ENCODE measurements at regions of chr15 and their contacts with region 1.

Region 1: GRCh38 chr15:40893733-40894688 is at the start of gene VPS18:
- H3K4me3 ChIP-seq: peak within 1 kb of the TSS; percentile 79
- H3K27ac ChIP-seq: peak within 1 kb of the TSS; percentile 41; the same call in 1 of the 2 replicates
- H3K4me1 ChIP-seq: no peaks in the 10 kb centered on the region
- CTCF ChIP-seq: peak; percentile 81

Region 2: DNA sequence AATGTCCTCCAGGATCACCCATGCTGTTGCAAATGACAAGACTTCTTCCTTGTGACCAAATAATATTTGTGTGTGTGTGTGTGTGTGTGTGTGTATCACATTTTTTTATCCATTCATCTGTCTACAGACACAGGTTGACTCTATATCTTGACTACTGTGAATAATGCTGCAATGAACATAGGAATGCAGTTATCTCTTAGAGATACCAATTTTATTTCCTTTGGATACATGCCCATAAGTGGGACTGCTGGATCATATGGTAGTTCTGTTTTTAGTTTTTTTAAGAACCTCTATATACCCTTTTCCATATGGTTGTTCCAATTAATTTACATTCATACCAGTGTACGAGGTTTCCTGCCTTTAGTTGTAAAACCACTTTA is 1015.6 kb before region 1 on chr15:
- CTCF ChIA-PET with region 1: no interaction called
- POLR2A ChIA-PET with region 1: no interaction called
- H3K4me3 ChIP-seq: no peak overlapping the region
- H3K27ac ChIP-seq: no peak overlapping the region
- H3K4me1 ChIP-seq: no peaks in the 10 kb centered on the region
- CTCF ChIP-seq: no peak

Region 3: DNA sequence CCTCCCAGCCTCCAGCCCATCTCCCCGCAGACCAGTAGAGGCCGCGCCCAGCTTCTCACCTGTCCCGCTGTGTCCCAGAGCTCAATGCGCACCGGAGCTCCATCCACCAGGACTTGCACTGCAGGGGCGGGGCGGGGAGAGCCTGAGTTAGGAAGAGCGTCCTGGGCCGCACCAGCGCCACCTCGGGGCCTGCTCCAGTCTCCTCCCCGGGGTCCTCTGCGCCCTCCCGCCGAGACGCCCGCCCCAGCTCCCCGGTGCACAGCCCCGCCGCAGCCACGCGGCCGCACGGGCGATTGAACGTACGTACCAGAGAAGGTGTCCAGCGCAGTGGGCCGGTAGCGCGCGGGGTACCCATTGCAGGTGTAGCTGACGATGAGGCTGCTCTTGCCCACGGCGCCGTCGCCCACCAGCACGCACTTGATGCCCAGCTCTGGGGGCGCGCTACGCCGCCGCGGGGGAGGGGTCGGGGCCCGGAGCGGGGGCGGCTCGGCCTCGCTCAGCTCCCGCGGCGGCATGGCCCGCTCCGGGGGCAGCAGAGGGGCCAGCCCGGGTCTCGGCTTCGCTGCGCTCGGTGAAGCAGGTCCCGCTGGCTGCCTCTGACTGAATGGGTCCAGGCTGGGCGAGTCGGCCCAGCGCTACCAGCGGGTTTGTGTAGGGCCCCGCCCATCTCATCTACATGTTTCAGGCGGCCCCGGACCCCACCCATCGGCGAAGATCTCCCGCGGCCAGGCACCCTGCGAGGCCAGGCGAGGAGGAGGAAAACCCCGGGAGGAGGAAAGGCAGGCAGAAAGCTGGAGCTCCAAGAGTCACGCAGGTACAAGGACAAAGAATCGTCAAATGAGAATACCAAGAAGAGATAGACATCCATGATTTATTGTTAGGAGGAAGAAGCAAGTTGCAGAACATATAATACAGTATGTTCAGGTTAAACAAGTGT is 20.1 kb before region 1 on chr15 and contains the start of gene RHOV:
- CTCF ChIA-PET with region 1: interaction called, 17 read pairs
- POLR2A ChIA-PET with region 1: interaction called, 19 read pairs
- H3K4me3 ChIP-seq: peak within 1 kb of the TSS; percentile 67
- H3K27ac ChIP-seq: peak within 1 kb of the TSS; percentile 69; the same call in 1 of the 2 replicates
- H3K4me1 ChIP-seq: 0 out of 2 replicates have a peak, but pooled peaks cover 2% of the 10 kb centered on the region
- CTCF ChIP-seq: peak; percentile 83

Region 4: DNA sequence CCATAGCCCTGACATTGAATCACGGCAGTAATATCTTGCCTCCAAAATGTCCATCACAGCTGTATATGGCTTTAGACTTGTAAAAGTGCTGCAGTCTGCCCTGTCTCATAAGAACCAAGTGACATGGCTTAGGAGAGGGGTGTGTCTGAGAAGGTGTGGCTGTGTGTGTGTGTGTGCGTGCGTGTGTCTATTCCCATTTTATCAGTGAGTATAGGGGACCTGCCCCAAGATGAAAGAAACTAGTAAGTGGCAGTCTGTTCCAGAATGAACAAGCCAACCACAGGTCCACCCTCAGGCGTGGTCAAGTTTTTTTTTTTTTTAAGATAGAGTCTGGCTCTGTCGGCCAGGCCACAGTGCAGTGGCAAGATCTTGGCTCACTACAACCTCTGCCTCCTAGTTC is 14.4 kb before region 1 on chr15:
- CTCF ChIA-PET with region 1: interaction called, 17 read pairs
- POLR2A ChIA-PET with region 1: interaction called, 19 read pairs
- H3K4me3 ChIP-seq: no peak overlapping the region
- H3K27ac ChIP-seq: no peak overlapping the region
- H3K4me1 ChIP-seq: 0 out of 2 replicates have a peak, but pooled peaks cover under 1% of the 10 kb centered on the region
- CTCF ChIP-seq: no peak

Region 5: GRCh38 chr15:40911693-40912092 is 17.7 kb after region 1 on chr15:
- CTCF ChIA-PET with region 1: no interaction called
- POLR2A ChIA-PET with region 1: no interaction called
- H3K4me3 ChIP-seq: no peak overlapping the region
- H3K27ac ChIP-seq: no peak overlapping the region
- H3K4me1 ChIP-seq: peaks cover 2% of the 10 kb centered on the region; the same call in 1 of the 2 replicates
- CTCF ChIP-seq: no peak